Heart left ventricle (tissue), 16 donors: ENCODE measurements at regions of chr11 and their contacts with region 1.

Region 1: DNA sequence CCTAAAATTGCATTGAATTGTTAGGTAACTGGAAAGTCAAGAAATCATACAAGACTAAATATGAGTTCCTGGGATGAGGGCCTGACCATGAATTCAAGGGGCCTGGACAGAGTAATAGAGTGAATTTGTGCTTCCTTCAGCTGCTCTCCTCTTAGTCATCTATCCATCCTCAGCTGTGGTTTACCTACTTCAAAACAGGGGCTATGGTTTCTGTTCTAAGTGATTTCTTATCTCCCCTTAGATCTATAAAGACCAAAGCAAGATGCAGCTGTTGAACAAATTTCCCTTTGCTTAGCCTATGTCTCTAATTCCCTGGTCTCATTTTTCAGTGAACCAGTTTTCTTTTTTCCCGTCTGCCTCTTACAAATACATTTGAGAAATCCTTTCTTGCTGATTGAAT is 428.5 kb downstream of the FAM181B start:
- DNase-seq: no peak
- ATAC-seq: no peak
- H3K4me3 ChIP-seq: no peak overlapping the region
- H3K27ac ChIP-seq: no peak overlapping the region
- H3K4me1 ChIP-seq: no peaks in the 10 kb centered on the region
- H3K27me3 ChIP-seq: no peaks in the 10 kb centered on the region
- CTCF ChIP-seq: no peak
- POLR2A ChIP-seq: no peak

Region 2: DNA sequence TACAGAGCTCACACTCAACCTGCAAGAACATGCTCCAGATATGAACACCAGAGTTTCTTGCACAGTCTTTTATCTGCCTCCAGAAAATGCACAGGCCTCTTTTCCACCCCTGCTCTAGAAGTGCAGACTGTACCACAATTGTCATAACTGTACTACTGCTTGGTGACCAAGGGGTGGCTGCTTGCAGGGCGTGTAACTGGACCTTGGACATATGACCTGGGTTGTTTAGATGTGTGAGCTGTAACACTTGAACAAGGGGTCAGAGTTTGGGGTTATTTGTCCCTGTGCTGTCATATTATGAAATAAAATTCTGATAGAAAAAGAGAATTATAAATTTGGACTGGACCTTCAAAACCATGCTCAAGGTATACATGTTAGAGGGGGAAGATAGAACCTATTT is 757.0 kb before region 1 on chr11:
- intact Hi-C with region 1: no loop called
- DNase-seq: no peak
- ATAC-seq: no peak
- H3K4me3 ChIP-seq: no peak overlapping the region
- H3K27ac ChIP-seq: no peak overlapping the region
- H3K4me1 ChIP-seq: no peaks in the 10 kb centered on the region
- H3K27me3 ChIP-seq: no peaks in the 10 kb centered on the region
- CTCF ChIP-seq: no peak
- POLR2A ChIP-seq: no peak

Region 3: GRCh38 chr11:82239913-82240312 is 65.2 kb before region 1 on chr11:
- intact Hi-C with region 1: loop called in 1 of 10 experiments (anchors 10 kb)
- DNase-seq: no peak
- ATAC-seq: no peak
- H3K4me3 ChIP-seq: no peak overlapping the region
- H3K27ac ChIP-seq: no peak overlapping the region
- H3K4me1 ChIP-seq: no peaks in the 10 kb centered on the region
- H3K27me3 ChIP-seq: no peaks in the 10 kb centered on the region
- CTCF ChIP-seq: no peak
- POLR2A ChIP-seq: no peak

Region 4: DNA sequence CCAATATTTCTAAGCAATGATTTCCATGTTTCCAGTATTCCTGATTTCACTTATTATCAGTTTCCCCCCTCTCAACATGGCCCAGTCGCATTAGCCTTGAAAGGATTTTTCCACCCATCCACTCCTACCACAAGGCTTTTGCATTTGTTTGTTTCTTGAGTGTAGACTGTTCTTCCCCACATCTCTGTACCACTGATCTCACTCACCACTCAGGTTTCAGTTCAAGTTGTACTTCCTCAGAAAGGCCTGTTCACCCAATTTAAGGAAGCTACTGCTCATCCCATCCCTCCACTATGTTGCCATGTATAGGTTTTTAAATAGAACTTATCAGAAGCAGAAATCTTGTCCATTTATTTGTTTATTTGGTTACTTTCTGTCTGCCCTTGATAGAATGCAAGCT is 43.8 kb before region 1 on chr11:
- intact Hi-C with region 1: no loop called
- DNase-seq: no peak
- ATAC-seq: no peak
- H3K4me3 ChIP-seq: no peak overlapping the region
- H3K27ac ChIP-seq: no peak overlapping the region
- H3K4me1 ChIP-seq: no peaks in the 10 kb centered on the region
- H3K27me3 ChIP-seq: no peaks in the 10 kb centered on the region
- CTCF ChIP-seq: no peak
- POLR2A ChIP-seq: no peak

Region 5: GRCh38 chr11:82356316-82356715 is 51.2 kb after region 1 on chr11:
- intact Hi-C with region 1: no loop called
- DNase-seq: no peak
- ATAC-seq: no peak
- H3K4me3 ChIP-seq: no peak overlapping the region
- H3K27ac ChIP-seq: no peak overlapping the region
- H3K4me1 ChIP-seq: no peaks in the 10 kb centered on the region
- H3K27me3 ChIP-seq: no peaks in the 10 kb centered on the region
- CTCF ChIP-seq: no peak
- POLR2A ChIP-seq: no peak